PC-9 (cell line): ENCODE measurements at regions of chr3 and their contacts with region 1.

Region 1: DNA sequence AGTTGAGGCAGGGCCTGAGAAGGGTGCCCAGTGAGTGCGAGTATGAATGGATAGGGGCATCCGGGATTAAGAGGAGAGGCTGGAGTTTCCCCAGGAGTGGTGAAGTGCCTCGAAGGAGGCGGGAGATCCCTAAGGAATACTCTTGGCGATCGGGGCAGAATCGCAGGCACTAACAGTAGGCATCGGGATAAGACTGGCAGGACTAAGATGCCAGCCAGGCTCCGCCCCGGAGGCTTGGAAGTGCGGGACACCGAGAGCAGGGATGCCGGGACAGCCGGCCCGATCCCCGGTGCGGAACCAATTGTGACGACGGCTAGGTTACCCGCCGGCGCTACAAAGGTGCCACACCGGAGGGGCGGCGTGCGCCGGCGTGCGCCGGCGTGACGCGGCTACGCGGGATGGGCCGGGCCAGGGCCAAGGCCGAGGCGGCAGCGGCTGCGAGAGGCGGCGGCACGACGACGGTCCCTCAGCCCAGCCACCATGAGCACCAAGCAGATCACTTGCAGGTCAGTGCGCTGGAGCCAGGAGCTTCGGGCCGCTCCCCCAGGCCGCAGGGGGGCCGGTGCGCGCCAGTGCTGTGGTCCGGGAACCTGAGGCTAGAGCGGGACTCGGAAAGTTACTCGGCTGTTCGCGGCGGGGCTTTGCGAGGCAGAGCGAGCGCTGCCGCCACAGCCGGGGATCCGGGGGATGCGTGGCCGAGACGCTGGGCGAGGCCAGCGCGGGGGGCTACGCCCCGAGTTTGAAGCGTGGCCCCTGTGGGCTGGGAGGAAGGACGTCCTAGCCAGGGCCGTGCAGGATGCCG is at the start of gene MKRN2:
- DNase-seq: peak; percentile 70 to 92
- H3K4me3 ChIP-seq: peak within 1 kb of the TSS; percentile 74
- H3K27ac ChIP-seq: peak within 1 kb of the TSS; percentile 80
- H3K4me1 ChIP-seq: peaks cover 21% of the 10 kb centered on the region
- H3K27me3 ChIP-seq: no peaks in the 10 kb centered on the region
- CTCF ChIP-seq: no peak
- total RNA-seq, gene MKRN2: 25.0 and 30.9 TPM in 2 replicates

Region 2: DNA sequence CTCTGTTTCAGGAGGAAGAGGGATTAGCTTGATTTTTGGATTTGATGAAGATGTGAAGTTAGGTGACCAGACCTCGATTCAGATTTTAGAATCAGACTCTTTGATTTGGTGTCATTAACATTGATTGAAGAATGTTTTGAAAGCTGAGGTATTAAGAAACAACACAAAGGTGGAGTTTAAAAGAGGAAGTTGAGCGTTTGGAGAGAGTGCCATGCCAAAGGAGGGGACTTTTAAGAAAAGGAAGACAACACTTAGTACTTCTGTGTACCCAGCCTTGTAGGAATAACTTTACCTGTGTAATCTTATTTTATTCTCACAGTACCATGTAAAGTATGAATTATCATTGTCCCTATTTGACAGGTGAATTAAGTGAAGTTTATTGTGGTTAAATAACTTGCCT is 233.6 kb before region 1 on chr3:
- CTCF ChIA-PET with region 1: interaction called, 11 read pairs
- POLR2A ChIA-PET with region 1: no interaction called
- intact Hi-C with region 1: no loop called
- DNase-seq: no peak
- H3K4me3 ChIP-seq: no peak overlapping the region
- H3K27ac ChIP-seq: 0 out of 2 replicates have a peak overlapping the region, but pooled peaks have one; percentile 29
- H3K4me1 ChIP-seq: peaks cover 22% of the 10 kb centered on the region
- H3K27me3 ChIP-seq: no peaks in the 10 kb centered on the region
- CTCF ChIP-seq: no peak

Region 3: DNA sequence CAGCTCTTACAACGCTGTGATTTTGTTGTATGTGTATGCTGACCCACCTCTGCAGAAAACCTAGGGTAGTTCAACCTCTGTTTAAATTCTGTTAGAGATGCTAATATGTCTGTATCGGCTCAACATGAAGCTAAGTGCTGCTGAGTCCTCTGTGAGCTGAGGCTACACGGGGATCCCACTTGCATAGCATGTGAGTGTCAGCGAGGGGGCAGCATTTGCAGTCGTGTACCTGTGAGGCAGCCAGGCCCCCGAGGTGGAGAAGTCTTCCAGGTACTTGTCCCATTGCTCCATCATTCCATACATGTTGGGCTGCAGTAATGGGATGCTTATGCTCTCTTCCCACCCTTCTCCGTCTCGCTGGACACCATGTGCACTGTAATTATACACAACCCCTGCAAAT is 15.2 kb before region 1 on chr3:
- CTCF ChIA-PET with region 1: no interaction called
- POLR2A ChIA-PET with region 1: interaction called, 11 read pairs
- intact Hi-C with region 1: no loop called
- DNase-seq: no peak
- H3K4me3 ChIP-seq: no peak overlapping the region
- H3K27ac ChIP-seq: no peak overlapping the region
- H3K4me1 ChIP-seq: peaks cover 22% of the 10 kb centered on the region
- H3K27me3 ChIP-seq: no peaks in the 10 kb centered on the region
- CTCF ChIP-seq: no peak

Region 4: DNA sequence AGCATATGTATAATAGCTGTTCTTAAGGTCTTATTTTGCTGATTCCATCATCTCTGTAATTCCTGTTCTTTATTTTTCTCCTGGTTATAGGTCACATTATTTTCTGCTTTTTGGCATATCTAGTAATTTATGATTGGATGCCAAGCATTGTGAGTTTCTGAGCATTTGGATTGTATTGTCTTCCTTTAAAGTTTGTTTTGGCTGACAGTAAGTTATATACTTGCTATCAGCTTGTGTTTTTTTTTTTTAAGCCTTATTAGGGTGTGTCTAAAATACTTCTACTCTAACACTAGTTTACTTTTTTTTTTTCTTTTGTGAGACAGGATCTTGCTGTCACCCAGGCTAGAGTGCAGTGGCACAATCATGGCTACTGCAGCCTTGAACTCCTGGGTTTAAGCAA is 10.1 kb after region 1 on chr3:
- CTCF ChIA-PET with region 1: no interaction called
- POLR2A ChIA-PET with region 1: interaction called, 10 read pairs
- intact Hi-C with region 1: no loop called
- DNase-seq: no peak
- H3K4me3 ChIP-seq: no peak overlapping the region
- H3K27ac ChIP-seq: no peak overlapping the region
- H3K4me1 ChIP-seq: no peaks in the 10 kb centered on the region
- H3K27me3 ChIP-seq: no peaks in the 10 kb centered on the region
- CTCF ChIP-seq: no peak

Region 5: GRCh38 chr3:13254028-13254951 is 697.4 kb after region 1 on chr3:
- CTCF ChIA-PET with region 1: no interaction called
- POLR2A ChIA-PET with region 1: no interaction called
- intact Hi-C with region 1: no loop called
- DNase-seq: no peak
- H3K4me3 ChIP-seq: no peak overlapping the region
- H3K27ac ChIP-seq: no peak overlapping the region
- H3K4me1 ChIP-seq: no peaks in the 10 kb centered on the region; the same call in 1 of the 2 replicates
- H3K27me3 ChIP-seq: no peaks in the 10 kb centered on the region
- CTCF ChIP-seq: no peak